ENCODE measurements at regions of chr4 and their contacts with region 1.

Region 1: DNA sequence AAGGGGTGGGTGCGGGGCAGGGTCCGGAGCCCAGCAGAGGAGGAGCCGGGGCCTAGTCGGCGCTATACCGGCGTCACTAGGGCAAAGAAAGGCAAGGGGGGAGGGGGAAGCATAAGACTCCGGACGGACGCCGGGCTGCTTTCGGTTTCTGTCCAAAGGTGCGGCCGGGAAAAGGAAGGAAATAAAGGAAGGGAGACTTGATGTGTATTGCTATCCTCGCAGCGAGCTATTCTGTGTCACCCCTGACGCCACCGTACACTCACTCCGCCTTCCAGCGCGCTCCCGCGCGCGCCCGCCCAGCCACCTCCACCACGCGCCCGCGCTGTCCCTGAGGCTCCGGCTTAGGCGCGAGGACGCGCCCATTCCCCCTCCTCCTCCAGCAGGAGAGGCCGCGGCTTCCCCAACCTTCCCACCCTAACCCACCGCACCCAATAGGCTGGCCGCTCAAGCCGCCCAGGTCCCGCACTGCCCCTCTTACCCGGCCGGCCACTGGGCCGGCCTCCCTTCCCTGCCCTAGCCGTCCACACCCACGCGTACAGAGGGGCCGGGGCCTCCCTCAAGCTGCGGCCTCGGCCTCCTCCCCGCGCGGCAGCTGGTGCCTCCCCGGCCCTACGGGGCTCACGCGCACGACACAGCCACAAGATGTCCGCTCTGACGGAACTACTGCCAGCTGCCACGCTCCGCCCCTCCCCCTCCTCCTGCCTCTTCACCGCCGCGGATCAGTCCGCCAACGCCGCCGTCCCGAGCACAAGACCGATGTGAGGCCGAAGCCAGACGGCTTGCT is at the start of gene UBE2D3:
- DNase-seq: peak; percentile 87
- H3K4me3 ChIP-seq: peak within 1 kb of the TSS; percentile 92 to 97
- H3K27ac ChIP-seq: peak within 1 kb of the TSS; percentile 100
- H3K4me1 ChIP-seq: no peaks in the 10 kb centered on the region
- H3K27me3 ChIP-seq: no peaks in the 10 kb centered on the region
- CTCF ChIP-seq: peak in 1 of 4 experiments; percentile 15
- POLR2A ChIP-seq: peak; percentile 46
- total RNA-seq, gene UBE2D3: 318 to 370 TPM

Region 2: GRCh38 chr4:102500696-102501446 is 326.2 kb before region 1 on chr4 and contains the start of gene NFKB1:
- intact Hi-C with region 1: loop called (anchors 2 kb)
- DNase-seq: peak; percentile 47
- H3K4me3 ChIP-seq: peak within 1 kb of the TSS; percentile 78 to 86
- H3K27ac ChIP-seq: peak within 1 kb of the TSS; percentile 96 to 98
- H3K4me1 ChIP-seq: no peaks in the 10 kb centered on the region
- H3K27me3 ChIP-seq: no peaks in the 10 kb centered on the region
- CTCF ChIP-seq: no peak
- POLR2A ChIP-seq: no peak
- total RNA-seq, gene NFKB1: 32.3 to 35.4 TPM

Region 3: DNA sequence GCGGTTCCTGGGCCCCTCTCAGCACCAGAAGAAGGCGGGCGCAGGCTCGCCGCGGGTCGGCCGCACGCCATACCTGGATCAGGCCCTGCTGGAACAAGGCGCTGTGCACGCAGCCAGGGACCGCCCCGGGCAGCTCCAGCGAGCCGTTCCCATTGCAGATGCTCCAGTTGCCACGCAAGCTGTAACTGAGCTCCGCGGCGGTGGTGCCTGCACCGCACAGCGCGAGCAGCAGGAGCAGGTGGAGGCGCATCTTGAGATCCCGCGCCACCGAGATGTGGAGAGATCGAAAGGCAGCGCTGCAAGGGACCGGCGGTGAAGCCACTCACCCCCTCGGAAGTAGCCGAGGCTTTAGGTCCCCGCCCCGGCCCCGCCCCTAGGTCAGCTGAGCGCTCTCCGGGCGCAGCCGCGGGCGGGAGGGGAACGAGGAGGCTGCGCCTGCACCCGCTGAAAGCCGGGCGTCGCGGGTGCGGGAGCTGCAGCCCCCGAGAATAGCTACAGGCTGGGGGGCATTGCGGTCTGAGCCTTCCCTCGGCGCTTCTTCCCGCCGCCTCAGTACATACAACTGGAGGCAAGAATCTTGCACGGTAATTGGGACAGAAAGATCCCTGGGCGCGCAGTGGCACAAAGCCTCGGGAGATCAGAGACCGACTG is 66.3 kb before region 1 on chr4 and contains the start of gene MANBA:
- intact Hi-C with region 1: loop called (anchors 5 kb)
- DNase-seq: peak; percentile 77
- H3K4me3 ChIP-seq: peak within 1 kb of the TSS; percentile 73 to 84
- H3K27ac ChIP-seq: peak within 1 kb of the TSS; percentile 64 to 71
- H3K4me1 ChIP-seq: no peaks in the 10 kb centered on the region
- H3K27me3 ChIP-seq: no peaks in the 10 kb centered on the region
- CTCF ChIP-seq: no peak
- POLR2A ChIP-seq: peak; percentile 89
- total RNA-seq, gene MANBA: 29.7 to 41.6 TPM

Region 4: DNA sequence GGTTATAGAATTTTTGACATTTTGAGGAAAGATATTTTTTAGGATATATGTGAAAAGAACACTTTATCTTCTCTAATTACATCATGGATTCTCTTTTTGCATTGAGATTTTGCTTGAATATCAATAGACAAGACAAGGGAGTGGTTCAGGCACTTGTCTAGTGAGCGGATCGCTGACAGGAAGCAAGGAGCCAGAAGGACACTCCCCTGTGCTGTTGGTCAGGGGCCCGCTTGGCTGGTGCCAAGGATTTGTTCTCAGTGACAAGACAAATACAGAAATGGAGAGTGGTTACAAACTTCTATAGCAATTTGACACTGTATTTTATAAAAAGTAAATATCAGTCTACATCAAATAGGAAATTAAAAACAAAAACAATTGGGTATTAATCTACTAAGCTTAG is 132.4 kb after region 1 on chr4:
- intact Hi-C with region 1: no loop called
- DNase-seq: no peak
- H3K4me3 ChIP-seq: no peak overlapping the region
- H3K27ac ChIP-seq: no peak overlapping the region
- H3K4me1 ChIP-seq: no peaks in the 10 kb centered on the region
- H3K27me3 ChIP-seq: no peaks in the 10 kb centered on the region
- CTCF ChIP-seq: no peak
- POLR2A ChIP-seq: no peak

Region 5: DNA sequence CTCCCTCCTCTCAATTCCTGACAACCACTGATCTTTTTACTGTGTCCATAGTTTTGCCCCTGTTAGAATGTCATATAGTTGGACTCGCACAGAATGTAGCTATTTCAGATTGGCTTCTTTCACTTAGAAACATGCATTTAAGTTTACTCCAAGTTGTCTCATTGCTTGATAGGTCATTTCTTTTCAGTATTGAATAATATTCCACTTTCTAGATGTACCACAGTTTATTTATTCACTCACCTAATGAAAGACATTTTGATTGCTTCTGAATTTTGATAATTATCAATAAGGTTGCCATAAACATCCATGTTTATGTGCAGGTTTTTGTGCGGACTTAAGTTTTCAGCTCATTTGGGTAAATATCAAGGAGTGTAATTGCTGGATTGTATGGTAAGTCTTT is 153.9 kb after region 1 on chr4:
- intact Hi-C with region 1: no loop called
- DNase-seq: no peak
- H3K4me3 ChIP-seq: no peak overlapping the region
- H3K27ac ChIP-seq: no peak overlapping the region
- H3K4me1 ChIP-seq: no peaks in the 10 kb centered on the region
- H3K27me3 ChIP-seq: no peaks in the 10 kb centered on the region
- CTCF ChIP-seq: no peak
- POLR2A ChIP-seq: no peak

Region 6: DNA sequence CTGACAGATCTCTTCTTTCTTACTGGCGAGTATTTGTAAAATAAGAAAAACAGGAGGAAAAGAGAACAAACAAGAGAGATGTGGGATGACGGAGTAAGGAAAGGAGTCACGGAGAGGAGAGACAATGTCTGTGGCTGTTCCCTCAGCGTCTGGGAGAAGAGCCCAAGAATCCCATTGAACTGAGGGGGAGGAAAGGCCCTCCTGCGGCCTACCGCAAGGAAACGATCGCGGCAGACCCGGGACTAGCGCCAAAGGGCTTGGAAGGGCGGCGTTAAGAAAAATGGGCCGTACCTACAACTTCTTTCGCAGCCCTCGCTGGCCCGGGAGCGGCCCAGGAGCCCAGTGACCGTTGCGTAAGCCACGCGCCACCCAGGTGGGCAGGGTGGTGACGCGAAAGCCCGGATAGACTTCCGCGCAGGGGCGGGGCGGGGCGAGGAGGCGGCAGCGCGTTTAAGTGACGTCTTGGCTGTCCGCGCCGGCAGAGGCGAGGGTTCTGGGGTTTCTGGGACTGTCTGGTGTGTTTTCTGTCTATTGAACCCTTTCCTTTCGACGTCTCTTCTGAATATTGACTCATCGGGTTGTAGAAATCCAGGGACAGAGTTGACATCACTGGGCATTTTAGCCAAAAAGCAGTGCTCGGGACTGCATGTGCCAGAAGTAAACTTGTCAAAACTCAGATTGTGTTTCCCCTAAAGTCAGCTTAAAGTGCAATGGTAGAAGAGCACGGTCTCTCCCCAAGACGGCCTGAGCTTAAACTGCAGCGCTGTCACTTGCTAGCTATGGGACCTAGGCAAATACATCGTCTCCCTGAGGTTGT is 192.4 kb after region 1 on chr4 and contains the start of gene SLC9B1:
- intact Hi-C with region 1: loop called (anchors 5 kb)
- DNase-seq: peak; percentile 97
- H3K4me3 ChIP-seq: peak within 1 kb of the TSS; percentile 29 to 40
- H3K27ac ChIP-seq: peak within 1 kb of the TSS; percentile 87 to 88
- H3K4me1 ChIP-seq: no peaks in the 10 kb centered on the region
- H3K27me3 ChIP-seq: no peaks in the 10 kb centered on the region
- CTCF ChIP-seq: peak in 2 of 4 experiments; percentile 8 to 26
- POLR2A ChIP-seq: peak; percentile 72
- total RNA-seq, gene SLC9B1: 9.3 TPM in 1 of 2 donors, not detected in the other